ENCODE measurements at regions of chr12 and their contacts with region 1.

Region 1: DNA sequence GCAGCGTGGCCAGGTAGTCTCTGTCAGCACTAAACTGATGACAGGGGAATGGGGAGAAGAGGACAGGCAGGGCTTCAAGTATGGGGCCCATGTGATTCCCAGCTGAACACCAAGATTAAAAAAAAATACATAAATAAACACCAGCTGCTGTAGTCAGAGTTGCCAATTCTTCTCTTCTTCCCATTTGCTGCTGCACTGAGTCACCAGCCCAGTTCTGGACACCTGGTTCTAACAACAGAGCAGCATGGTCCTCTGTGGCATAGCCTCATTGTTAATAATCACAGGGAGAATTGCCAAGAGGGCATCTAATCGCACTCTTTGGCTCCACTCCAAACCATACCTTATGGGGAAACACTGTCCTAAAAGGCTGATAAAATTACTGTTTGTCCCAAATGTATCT is 15.1 kb downstream of the PPM1H start:
- DNase-seq: no peak
- ATAC-seq: no peak
- H3K4me3 ChIP-seq: no peak overlapping the region
- H3K27ac ChIP-seq: no peak overlapping the region
- H3K4me1 ChIP-seq: peaks cover 25% of the 10 kb centered on the region
- H3K27me3 ChIP-seq: no peaks in the 10 kb centered on the region
- CTCF ChIP-seq: no peak

Region 2: DNA sequence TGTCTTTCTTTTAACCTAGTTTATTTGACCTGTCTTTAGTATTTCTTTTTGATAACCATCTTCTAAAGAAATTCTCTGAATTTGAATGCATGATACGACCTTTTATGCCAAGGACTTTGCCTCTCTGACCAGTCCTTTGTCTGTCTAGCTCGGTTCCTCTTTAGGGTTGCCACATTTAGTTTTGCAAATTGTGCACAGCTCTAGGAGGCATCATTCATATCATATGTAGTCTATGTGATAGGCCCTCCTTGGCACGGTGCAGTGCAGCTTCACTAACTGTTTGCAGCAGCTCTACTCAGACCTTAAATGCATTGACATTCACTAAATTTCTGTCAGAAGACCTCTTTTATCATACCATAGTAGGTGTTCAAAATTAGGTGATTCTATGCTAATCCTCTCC is 584.0 kb before region 1 on chr12:
- CTCF ChIA-PET with region 1: no interaction called
- POLR2A ChIA-PET with region 1: no interaction called
- in situ Hi-C with region 1: no loop called
- intact Hi-C with region 1: no loop called
- DNase-seq: no peak
- ATAC-seq: no peak
- H3K4me3 ChIP-seq: no peak overlapping the region
- H3K27ac ChIP-seq: no peak overlapping the region
- H3K4me1 ChIP-seq: no peaks in the 10 kb centered on the region
- H3K27me3 ChIP-seq: no peaks in the 10 kb centered on the region
- CTCF ChIP-seq: no peak

Region 3: GRCh38 chr12:62882696-62883095 is 37.1 kb before region 1 on chr12:
- CTCF ChIA-PET with region 1: no interaction called
- POLR2A ChIA-PET with region 1: interaction called, 10 read pairs
- in situ Hi-C with region 1: no loop called
- intact Hi-C with region 1: no loop called
- DNase-seq: no peak
- ATAC-seq: no peak
- H3K4me3 ChIP-seq: no peak overlapping the region
- H3K27ac ChIP-seq: no peak overlapping the region
- H3K4me1 ChIP-seq: no peaks in the 10 kb centered on the region
- H3K27me3 ChIP-seq: no peaks in the 10 kb centered on the region
- CTCF ChIP-seq: no peak

Region 4: DNA sequence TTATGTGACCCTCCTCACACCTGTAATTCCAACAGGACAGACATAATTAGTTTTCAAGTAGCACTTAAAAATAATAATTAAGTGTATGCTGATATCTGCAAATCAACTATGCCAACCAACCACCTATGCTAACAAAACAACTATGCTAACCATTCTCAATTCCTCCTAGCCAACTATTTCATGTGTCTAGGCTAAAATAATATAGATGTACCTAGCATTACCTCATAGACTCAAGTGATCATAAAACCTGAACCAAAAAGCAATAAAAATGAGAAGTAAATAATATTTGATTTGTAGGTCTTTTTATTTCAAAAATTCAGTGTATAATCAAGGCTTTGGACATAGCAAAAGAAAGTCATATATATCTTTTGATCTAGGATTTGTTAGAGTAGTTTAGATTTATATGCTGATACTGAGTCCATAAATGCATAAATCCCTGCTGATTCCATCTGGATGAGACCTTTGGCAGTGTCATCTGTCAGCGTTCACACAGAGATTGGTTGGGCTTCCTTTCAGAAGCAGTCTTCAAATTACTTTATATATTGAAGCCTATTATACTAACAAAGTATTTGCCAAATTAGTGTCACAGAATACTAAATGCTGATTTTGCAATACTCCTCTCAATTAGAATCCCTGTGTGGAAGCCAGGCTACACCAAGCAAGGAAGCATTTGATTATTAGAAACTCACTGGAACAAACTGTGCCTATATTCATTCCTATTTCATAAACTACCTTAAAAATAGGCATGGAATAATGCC is 116.6 kb after region 1 on chr12:
- CTCF ChIA-PET with region 1: no interaction called
- POLR2A ChIA-PET with region 1: no interaction called
- in situ Hi-C with region 1: no loop called
- intact Hi-C with region 1: no loop called
- DNase-seq: no peak
- ATAC-seq: no peak
- H3K4me3 ChIP-seq: no peak overlapping the region
- H3K27ac ChIP-seq: no peak overlapping the region
- H3K4me1 ChIP-seq: no peaks in the 10 kb centered on the region
- H3K27me3 ChIP-seq: peaks cover 8% of the 10 kb centered on the region; the same call in 1 of the 2 replicates
- CTCF ChIP-seq: no peak

Region 5: DNA sequence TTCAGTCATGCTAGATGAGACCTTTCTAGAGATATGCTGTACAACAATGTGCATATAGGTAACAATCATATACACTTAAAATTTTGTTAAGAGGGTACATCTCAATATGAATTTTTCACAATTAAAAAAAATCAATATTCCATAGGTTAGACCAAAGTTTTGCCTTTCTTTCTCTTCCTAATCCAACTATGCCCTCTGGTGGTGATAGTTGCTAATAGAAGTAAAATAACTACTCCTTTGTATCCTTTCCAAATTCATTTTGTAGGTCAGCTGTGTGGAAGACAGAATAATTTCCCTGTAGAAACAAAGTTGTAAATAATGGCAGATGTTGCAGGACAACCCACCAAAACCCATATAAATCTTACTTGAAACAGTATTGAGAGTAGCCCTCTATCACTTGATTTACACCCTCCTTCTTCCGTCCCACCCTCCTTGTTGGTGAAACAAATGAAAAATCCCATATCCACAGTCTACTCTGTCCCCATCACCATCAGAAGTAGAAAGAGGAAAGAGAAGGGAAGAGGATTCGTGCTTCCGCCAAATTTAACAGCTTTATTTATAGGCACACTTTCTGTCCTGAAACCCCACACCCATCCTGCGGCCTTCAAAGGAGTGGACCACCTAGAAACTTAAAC is 1336.4 kb after region 1 on chr12:
- CTCF ChIA-PET with region 1: interaction called, 11 read pairs
- POLR2A ChIA-PET with region 1: no interaction called
- in situ Hi-C with region 1: no loop called
- intact Hi-C with region 1: no loop called
- DNase-seq: no peak
- ATAC-seq: peak; percentile 60
- H3K4me3 ChIP-seq: no peak overlapping the region
- H3K27ac ChIP-seq: no peak overlapping the region
- H3K4me1 ChIP-seq: no peaks in the 10 kb centered on the region
- H3K27me3 ChIP-seq: no peaks in the 10 kb centered on the region
- CTCF ChIP-seq: peak; percentile 66; the same call in 1 of the 2 replicates

Measured in Panc1 (cell line).